Prostate gland (tissue), 2 donors: ENCODE measurements at regions of chr18 and their contacts with region 1.

Region 1: GRCh38 chr18:54392543-54393023 is 34.9 kb downstream of the C18orf54 start:
- DNase-seq: no peak
- H3K4me3 ChIP-seq: no peak overlapping the region
- H3K27ac ChIP-seq: no peak overlapping the region
- H3K4me1 ChIP-seq: no peaks in the 10 kb centered on the region
- H3K27me3 ChIP-seq: no peaks in the 10 kb centered on the region
- CTCF ChIP-seq: peak; percentile 45 to 68 (median 61)
- POLR2A ChIP-seq: no peak

Region 2: DNA sequence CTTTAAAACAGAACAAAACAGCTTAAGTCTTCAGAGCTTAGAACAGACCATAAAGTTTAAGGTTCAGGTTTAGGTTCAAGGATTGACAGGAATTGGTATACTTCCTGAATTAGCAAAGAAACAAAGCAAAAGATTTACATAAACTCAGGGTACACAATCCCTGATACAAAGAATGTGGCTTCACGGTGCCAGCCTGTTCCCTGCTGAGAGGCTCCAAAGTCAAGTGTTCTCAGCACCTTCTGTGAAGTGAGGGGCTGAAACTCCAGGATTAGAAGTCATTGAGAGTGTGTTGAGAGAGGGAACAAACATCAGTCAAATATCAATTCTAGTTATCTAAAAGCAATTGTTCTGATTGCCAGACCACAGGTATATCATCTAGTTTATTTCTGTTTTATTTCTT is 234.2 kb after region 1 on chr18:
- intact Hi-C with region 1: no loop called
- DNase-seq: no peak
- H3K4me3 ChIP-seq: no peak overlapping the region
- H3K27ac ChIP-seq: no peak overlapping the region
- H3K4me1 ChIP-seq: no peaks in the 10 kb centered on the region
- H3K27me3 ChIP-seq: no peaks in the 10 kb centered on the region
- CTCF ChIP-seq: no peak
- POLR2A ChIP-seq: no peak

Region 3: DNA sequence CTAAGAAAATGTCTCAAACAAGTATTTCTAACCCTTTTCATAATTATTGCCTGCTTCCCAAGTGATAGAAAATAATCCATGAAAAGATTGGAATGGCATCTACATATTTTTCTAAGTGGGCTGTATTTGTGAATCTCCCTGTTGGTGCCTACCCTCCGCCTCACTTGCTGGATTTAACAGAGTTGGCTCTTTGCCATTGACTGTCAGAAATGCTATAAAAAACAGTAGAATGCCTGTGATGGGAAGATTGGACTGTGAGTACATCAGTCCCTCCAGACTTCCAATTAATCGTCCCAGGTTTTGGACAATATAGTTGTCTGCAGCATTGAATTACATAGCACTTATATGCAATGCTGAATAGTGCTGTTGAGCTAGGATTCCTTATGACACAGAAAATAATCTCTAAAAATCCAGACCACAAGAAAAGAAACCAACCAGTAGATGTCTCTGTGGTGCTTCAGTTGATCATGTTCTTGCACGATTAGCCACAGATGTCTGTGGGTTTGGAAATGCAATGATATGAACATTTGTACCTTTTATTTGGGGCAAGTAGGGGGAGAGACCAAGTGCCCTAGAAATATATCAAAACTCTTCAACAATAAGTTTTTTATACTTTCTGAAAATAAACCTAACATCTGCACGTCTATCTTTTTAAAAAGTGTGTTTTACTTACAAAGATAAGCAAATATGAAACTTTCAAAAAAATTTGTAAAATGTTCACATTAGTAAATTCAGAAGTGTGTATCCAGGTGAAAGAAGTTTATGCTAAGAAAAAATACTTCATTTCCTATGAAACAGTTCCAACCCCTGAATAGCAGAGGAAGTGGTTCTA is 287.0 kb after region 1 on chr18:
- intact Hi-C with region 1: loop called (anchors 10 kb)
- DNase-seq: peak; percentile 39
- H3K4me3 ChIP-seq: no peak overlapping the region
- H3K27ac ChIP-seq: no peak overlapping the region
- H3K4me1 ChIP-seq: no peaks in the 10 kb centered on the region
- H3K27me3 ChIP-seq: no peaks in the 10 kb centered on the region
- CTCF ChIP-seq: peak in 3 of 4 experiments; percentile 59 to 65 (median 62)
- POLR2A ChIP-seq: no peak